ENCODE measurements at regions of chr12 and their contacts with region 1.

Region 1: GRCh38 chr12:92987362-92987761 is 58.3 kb upstream of the EEA1 start:
- DNase-seq: no peak

Region 2: GRCh38 chr12:91718326-91718725 is 1269.0 kb before region 1 on chr12:
- intact Hi-C with region 1: no loop called
- DNase-seq: no peak

Region 3: GRCh38 chr12:93390549-93391297 is 403.4 kb after region 1 on chr12:
- intact Hi-C with region 1: loop called in 1 of 2 experiments (anchors 10 kb)
- DNase-seq: no peak